ENCODE measurements at regions of chr7 and their contacts with region 1.

Region 1: GRCh38 chr7:150481186-150481920 is 30.9 kb downstream of the GIMAP8 start:
- DNase-seq: peak; percentile 58 to 79
- ATAC-seq: peak; percentile 86 to 94 (median 92)
- H3K4me3 ChIP-seq: no peak overlapping the region
- H3K4me3 Mint-ChIP-seq: peak overlapping the region; percentile 83
- H3K27ac ChIP-seq: peak overlapping the region; percentile 89
- H3K27ac Mint-ChIP-seq: peak overlapping the region; percentile 96 to 97
- H3K4me1 ChIP-seq: peaks cover 40% of the 10 kb centered on the region
- H3K4me1 Mint-ChIP-seq: peaks cover 84 to 89% of the 10 kb centered on the region in 2 donors
- H3K27me3 ChIP-seq: no peaks in the 10 kb centered on the region
- H3K27me3 Mint-ChIP-seq: no peaks in the 10 kb centered on the region
- CTCF ChIP-seq: no peak

Region 2: GRCh38 chr7:150448789-150449147 is 32.6 kb before region 1 on chr7:
- intact Hi-C with region 1: loop called (anchors 1 kb)
- DNase-seq: peak; percentile 78 to 95
- ATAC-seq: peak; percentile 69 to 76 (median 72)
- H3K4me3 ChIP-seq: no peak overlapping the region
- H3K4me3 Mint-ChIP-seq: peak overlapping the region; percentile 96
- H3K27ac ChIP-seq: peak overlapping the region; percentile 89
- H3K27ac Mint-ChIP-seq: peak overlapping the region; percentile 92 to 97
- H3K4me1 ChIP-seq: peaks cover 68% of the 10 kb centered on the region
- H3K4me1 Mint-ChIP-seq: peaks cover 53 to 65% of the 10 kb centered on the region in 2 donors
- H3K27me3 ChIP-seq: no peaks in the 10 kb centered on the region
- H3K27me3 Mint-ChIP-seq: no peaks in the 10 kb centered on the region
- CTCF ChIP-seq: peak; percentile 93

Region 3: GRCh38 chr7:150514748-150515222 is 33.4 kb after region 1 on chr7 and contains the start of gene GIMAP7:
- intact Hi-C with region 1: loop called (anchors 2 kb)
- DNase-seq: peak; percentile 46 to 83
- ATAC-seq: peak; percentile 74 to 84 (median 81)
- H3K4me3 ChIP-seq: peak within 1 kb of the TSS; percentile 83
- H3K4me3 Mint-ChIP-seq: peak within 1 kb of the TSS; percentile 100
- H3K27ac ChIP-seq: peak within 1 kb of the TSS; percentile 73
- H3K27ac Mint-ChIP-seq: peak within 1 kb of the TSS; percentile 96 to 100
- H3K4me1 ChIP-seq: peaks cover 34% of the 10 kb centered on the region
- H3K4me1 Mint-ChIP-seq: peaks cover 58 to 65% of the 10 kb centered on the region in 2 donors
- H3K27me3 ChIP-seq: no peaks in the 10 kb centered on the region
- H3K27me3 Mint-ChIP-seq: no peaks in the 10 kb centered on the region
- CTCF ChIP-seq: no peak
- total RNA-seq, gene GIMAP7: 66.3 to 100 (median 67.6) TPM

Region 4: GRCh38 chr7:150556521-150557138 is 75.3 kb after region 1 on chr7:
- intact Hi-C with region 1: loop called (anchors 1 kb)
- DNase-seq: peak in 1 of 2 donors; percentile 79
- ATAC-seq: peak; percentile 97 to 99 (median 98)
- H3K4me3 ChIP-seq: no peak overlapping the region
- H3K4me3 Mint-ChIP-seq: peak overlapping the region; percentile 85
- H3K27ac ChIP-seq: peak overlapping the region; percentile 89
- H3K27ac Mint-ChIP-seq: peak overlapping the region; percentile 89 to 95
- H3K4me1 ChIP-seq: peaks cover 12% of the 10 kb centered on the region
- H3K4me1 Mint-ChIP-seq: peaks cover 50 to 63% of the 10 kb centered on the region in 2 donors
- H3K27me3 ChIP-seq: no peaks in the 10 kb centered on the region
- H3K27me3 Mint-ChIP-seq: no peaks in the 10 kb centered on the region
- CTCF ChIP-seq: no peak

Region 5: GRCh38 chr7:150645259-150646020 is 164.1 kb after region 1 on chr7:
- intact Hi-C with region 1: no loop called
- DNase-seq: peak in 1 of 2 donors; percentile 26
- ATAC-seq: no peak
- H3K4me3 ChIP-seq: no peak overlapping the region
- H3K4me3 Mint-ChIP-seq: no peak overlapping the region
- H3K27ac ChIP-seq: no peak overlapping the region
- H3K27ac Mint-ChIP-seq: no peak overlapping the region
- H3K4me1 ChIP-seq: peaks cover 9% of the 10 kb centered on the region
- H3K4me1 Mint-ChIP-seq: peaks cover 13 to 28% of the 10 kb centered on the region in 2 donors
- H3K27me3 ChIP-seq: no peaks in the 10 kb centered on the region
- H3K27me3 Mint-ChIP-seq: no peaks in the 10 kb centered on the region
- CTCF ChIP-seq: no peak